Gastrocnemius medialis (tissue), 4 donors: ENCODE measurements at regions of chr20 and their contacts with region 1.

Region 1: GRCh38 chr20:13610184-13610583 is 28.5 kb downstream of the TASP1 start:
- DNase-seq: no peak
- ATAC-seq: no peak
- H3K4me3 ChIP-seq: no peak overlapping the region
- H3K27ac ChIP-seq: no peak overlapping the region
- H3K4me1 ChIP-seq: no peaks in the 10 kb centered on the region
- H3K27me3 ChIP-seq: no peaks in the 10 kb centered on the region
- CTCF ChIP-seq: no peak
- POLR2A ChIP-seq: no peak

Region 2: GRCh38 chr20:13671916-13672378 is 61.8 kb after region 1 on chr20:
- in situ Hi-C with region 1: no loop called
- intact Hi-C with region 1: loop called (anchors 10 kb)
- DNase-seq: no peak
- ATAC-seq: peak; percentile 41 to 60
- H3K4me3 ChIP-seq: no peak overlapping the region
- H3K27ac ChIP-seq: peak overlapping the region in 1 of 4 donors; percentile 47
- H3K4me1 ChIP-seq: no peaks in the 10 kb centered on the region
- H3K27me3 ChIP-seq: no peaks in the 10 kb centered on the region
- CTCF ChIP-seq: no peak
- POLR2A ChIP-seq: no peak